Posterior cingulate gyrus (tissue), 11 donors: ENCODE measurements at regions of chr14 and their contacts with region 1.

Region 1: DNA sequence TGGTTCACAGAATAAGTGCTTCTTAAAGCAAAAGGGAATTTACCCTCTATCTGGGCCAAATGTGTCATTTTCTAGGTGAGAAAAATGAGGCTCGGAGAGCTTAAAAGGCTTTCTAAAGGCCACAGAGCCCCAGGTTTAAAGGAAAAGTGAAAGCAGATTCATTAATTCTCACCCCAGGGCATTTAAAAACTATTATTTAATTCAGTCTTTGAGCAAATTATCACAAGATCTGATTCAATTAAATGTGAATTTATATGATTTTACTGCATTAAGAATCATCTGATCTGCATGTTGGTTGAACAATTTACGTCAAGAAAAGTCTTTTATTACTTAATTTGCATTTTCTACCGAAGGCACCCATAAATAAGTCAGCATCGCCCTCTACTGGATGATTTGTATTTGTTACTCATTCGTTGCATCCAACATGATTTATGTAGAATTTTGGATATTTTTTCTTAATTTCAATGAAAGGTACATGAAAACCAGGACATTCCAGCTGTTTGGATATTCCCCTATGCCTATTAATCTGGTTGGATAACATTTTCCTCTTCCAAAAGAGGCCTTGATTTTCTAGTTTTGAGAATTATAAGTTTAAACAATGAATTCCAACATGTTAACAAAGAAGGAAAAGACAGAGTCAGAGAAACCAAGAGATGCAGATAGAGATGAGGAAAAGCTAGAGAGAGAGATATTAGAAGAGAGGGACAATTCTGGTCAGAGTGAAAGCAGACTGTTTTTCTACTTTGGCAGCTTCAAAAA is 19.1 kb upstream of the DHRS7 start:
- DNase-seq: no peak

Region 2: DNA sequence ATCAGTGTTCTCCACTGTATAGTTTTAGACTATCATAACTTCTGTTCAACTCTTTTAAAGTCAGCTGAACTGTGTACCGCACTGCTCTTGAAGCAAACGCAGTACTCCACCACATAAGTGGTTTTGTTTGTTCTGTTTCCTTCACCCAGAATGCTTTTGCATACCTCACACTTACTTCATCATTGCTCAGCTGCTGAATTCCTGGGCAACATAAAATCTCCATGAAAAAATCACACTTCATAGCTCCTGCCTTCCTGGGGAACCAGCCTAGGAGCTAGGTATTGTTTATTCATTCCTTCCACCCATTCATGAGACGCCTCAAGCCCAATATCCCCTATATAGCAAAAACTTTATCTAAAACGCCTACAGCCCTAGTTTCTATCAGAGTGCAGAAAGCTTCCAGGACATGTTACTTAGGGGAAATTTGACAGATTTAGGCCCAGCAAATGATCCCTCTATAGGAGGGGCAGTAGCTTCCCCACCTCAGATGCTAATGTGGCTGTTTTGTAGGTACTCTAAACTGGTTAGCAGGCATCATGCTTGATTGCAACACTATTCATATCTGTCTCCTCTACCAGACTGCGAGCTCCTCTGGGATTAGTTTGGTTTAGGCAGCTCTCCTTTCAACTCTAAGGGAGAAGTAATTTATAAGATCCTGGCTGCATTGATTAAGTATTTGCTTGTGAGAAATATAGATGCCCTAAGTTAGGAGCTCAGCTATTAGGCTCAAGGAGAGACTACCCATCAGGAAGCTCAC is 219.9 kb before region 1 on chr14:
- intact Hi-C with region 1: loop called (anchors 1 kb)
- DNase-seq: no peak

Region 3: DNA sequence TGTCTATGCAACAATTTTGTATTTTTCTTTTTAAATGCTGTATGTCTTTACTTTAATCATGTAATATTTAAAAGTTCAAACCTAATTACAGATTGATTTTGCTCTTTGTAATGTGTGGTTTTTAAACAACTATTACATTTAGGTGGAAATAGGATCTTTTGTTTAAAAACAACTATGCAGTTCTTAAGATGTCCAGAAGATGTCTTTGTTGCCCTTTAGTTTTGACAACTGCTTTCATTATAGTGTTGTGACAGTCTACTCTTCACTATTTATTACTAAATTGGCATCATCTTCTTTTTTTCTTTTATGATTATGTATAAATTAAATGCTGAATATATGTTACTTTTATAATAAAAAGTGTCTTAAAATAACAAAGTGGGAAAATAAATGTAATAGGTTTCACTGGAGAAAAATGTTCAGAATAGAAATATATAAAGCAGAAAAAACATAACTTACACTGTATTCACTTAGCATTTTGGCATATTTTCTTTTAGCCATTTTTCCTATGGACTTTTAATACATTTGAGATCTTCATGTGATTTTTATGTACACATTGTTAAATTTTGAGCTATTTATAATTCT is 119.7 kb before region 1 on chr14:
- intact Hi-C with region 1: loop called (anchors 1 kb)
- DNase-seq: no peak

Region 4: GRCh38 chr14:60248697-60249318 is 64.5 kb after region 1 on chr14 and contains the start of gene PPM1A:
- intact Hi-C with region 1: loop called (anchors 10 kb)
- DNase-seq: peak; percentile 90 to 98 (median 92)

Region 5: GRCh38 chr14:60294411-60295069 is 110.2 kb after region 1 on chr14:
- intact Hi-C with region 1: no loop called
- DNase-seq: no peak

Region 6: GRCh38 chr14:60561845-60562746 is 377.8 kb after region 1 on chr14:
- intact Hi-C with region 1: loop called (anchors 5 kb)
- DNase-seq: peak in 9 of 10 donors; percentile 19 to 89 (median 42)